ENCODE measurements at regions of chr7 and their contacts with region 1.

Region 1: GRCh38 chr7:149220539-149220938 is 18.9 kb upstream of the ZNF212 start:
- DNase-seq: no peak
- H3K4me3 ChIP-seq: no peak overlapping the region
- H3K27ac ChIP-seq: no peak overlapping the region
- H3K4me1 ChIP-seq: no peaks in the 10 kb centered on the region
- CTCF ChIP-seq: no peak

Region 2: GRCh38 chr7:149239345-149240191 is 19.0 kb after region 1 on chr7 and contains the start of gene ZNF212:
- CTCF ChIA-PET with region 1: no interaction called
- POLR2A ChIA-PET with region 1: interaction called, 10 read pairs
- intact Hi-C with region 1: no loop called
- DNase-seq: peak; percentile 92
- H3K4me3 ChIP-seq: peak within 1 kb of the TSS; percentile 81
- H3K27ac ChIP-seq: peak within 1 kb of the TSS; percentile 23
- H3K4me1 ChIP-seq: peaks cover 16% of the 10 kb centered on the region
- CTCF ChIP-seq: peak; percentile 84
- total RNA-seq, gene ZNF212: 11.6 and 13.1 TPM in 2 replicates

Region 3: GRCh38 chr7:149284850-149285626 is 64.5 kb after region 1 on chr7:
- CTCF ChIA-PET with region 1: no interaction called
- POLR2A ChIA-PET with region 1: no interaction called
- intact Hi-C with region 1: no loop called
- DNase-seq: peak; percentile 97
- H3K4me3 ChIP-seq: peak overlapping the region; percentile 64
- H3K27ac ChIP-seq: peak overlapping the region; percentile 78
- H3K4me1 ChIP-seq: peaks cover 34% of the 10 kb centered on the region
- CTCF ChIP-seq: peak; percentile 61

Region 4: GRCh38 chr7:149873074-149873969 is 652.8 kb after region 1 on chr7 and contains the start of gene ATP6V0E2:
- CTCF ChIA-PET with region 1: no interaction called
- POLR2A ChIA-PET with region 1: no interaction called
- intact Hi-C with region 1: no loop called
- DNase-seq: peak; percentile 95
- H3K4me3 ChIP-seq: peak within 1 kb of the TSS; percentile 75
- H3K27ac ChIP-seq: peak within 1 kb of the TSS; percentile 25
- H3K4me1 ChIP-seq: peaks cover 48% of the 10 kb centered on the region
- CTCF ChIP-seq: no peak
- total RNA-seq, gene ATP6V0E2: 35.2 and 38.6 TPM in 2 replicates